ENCODE measurements at regions of chr12 and their contacts with region 1.

Region 1: GRCh38 chr12:80214366-80214765 is 115.0 kb downstream of the OTOGL start:
- DNase-seq: no peak
- ATAC-seq: no peak
- H3K4me3 ChIP-seq: no peak overlapping the region
- H3K27ac ChIP-seq: no peak overlapping the region
- H3K4me1 ChIP-seq: no peaks in the 10 kb centered on the region
- H3K27me3 ChIP-seq: no peaks in the 10 kb centered on the region
- CTCF ChIP-seq: no peak
- POLR2A ChIP-seq: no peak

Region 2: DNA sequence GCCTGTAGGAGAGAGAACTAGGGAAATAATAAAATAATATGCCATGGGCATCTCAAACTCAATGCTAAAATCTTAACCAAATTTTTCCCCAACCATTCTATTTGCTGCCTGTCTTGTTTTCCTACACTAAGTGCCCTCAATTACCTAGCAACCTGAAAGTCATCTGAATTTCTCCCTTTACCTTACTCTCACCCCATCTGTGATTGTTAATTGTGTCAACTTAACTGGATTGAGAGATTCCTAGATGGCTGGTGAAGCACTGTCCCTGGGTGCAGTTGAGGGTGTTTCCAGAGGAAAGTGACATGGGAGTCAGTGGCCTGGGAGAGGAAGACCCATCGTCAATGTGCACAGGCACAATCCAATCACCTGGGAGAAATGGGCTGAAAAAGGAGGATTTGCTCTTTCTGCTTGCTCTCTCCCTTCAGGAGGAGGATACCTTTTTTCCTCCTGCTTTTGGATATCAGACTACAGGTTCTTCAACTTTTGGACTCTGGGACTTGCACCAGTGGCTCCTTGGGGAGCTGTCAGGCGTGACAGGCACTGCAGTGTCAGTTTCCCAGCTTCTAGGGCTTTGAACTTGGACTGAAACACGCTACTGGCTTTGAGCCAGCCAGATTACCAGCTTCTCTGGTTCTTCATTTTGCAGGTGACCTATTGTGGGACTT is 379.5 kb before region 1 on chr12:
- in situ Hi-C with region 1: no loop called
- intact Hi-C with region 1: no loop called
- DNase-seq: no peak
- ATAC-seq: peak in 1 of 2 donors; percentile 8
- H3K4me3 ChIP-seq: no peak overlapping the region
- H3K27ac ChIP-seq: no peak overlapping the region
- H3K4me1 ChIP-seq: peaks cover 15 to 19% of the 10 kb centered on the region in 2 donors
- H3K27me3 ChIP-seq: no peaks in the 10 kb centered on the region
- CTCF ChIP-seq: no peak
- POLR2A ChIP-seq: no peak

Region 3: DNA sequence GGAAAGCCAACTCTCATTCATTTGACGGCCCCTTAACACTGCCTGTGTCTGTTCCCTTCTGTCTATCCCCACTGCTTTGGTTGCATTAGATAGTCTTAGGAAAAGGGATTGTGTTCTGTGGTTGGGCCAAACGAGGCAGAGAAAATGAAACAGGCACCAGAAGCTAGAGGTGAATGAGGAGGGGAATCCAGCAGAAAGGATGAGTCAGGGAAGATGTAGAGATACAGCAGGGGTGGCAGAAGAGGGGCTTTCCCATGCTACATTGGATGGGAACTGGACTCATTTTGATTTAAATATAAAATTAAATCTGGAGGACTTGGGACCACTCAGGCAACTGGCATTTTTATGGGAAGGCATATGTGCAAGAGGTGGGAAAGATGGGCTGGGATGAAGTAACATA is 71.7 kb before region 1 on chr12:
- in situ Hi-C with region 1: no loop called
- intact Hi-C with region 1: no loop called
- DNase-seq: no peak
- ATAC-seq: no peak
- H3K4me3 ChIP-seq: no peak overlapping the region
- H3K27ac ChIP-seq: no peak overlapping the region
- H3K4me1 ChIP-seq: no peaks in the 10 kb centered on the region
- H3K27me3 ChIP-seq: no peaks in the 10 kb centered on the region
- CTCF ChIP-seq: no peak
- POLR2A ChIP-seq: no peak

Region 4: GRCh38 chr12:80201908-80202307 is 12.5 kb before region 1 on chr12:
- in situ Hi-C with region 1: no loop called
- intact Hi-C with region 1: loop called (anchors 1 kb)
- DNase-seq: no peak
- ATAC-seq: no peak
- H3K4me3 ChIP-seq: no peak overlapping the region
- H3K27ac ChIP-seq: no peak overlapping the region
- H3K4me1 ChIP-seq: no peaks in the 10 kb centered on the region
- H3K27me3 ChIP-seq: no peaks in the 10 kb centered on the region
- CTCF ChIP-seq: no peak
- POLR2A ChIP-seq: no peak